HCT116 (cell line): ENCODE measurements at regions of chr2 and their contacts with region 1.

Region 1: DNA sequence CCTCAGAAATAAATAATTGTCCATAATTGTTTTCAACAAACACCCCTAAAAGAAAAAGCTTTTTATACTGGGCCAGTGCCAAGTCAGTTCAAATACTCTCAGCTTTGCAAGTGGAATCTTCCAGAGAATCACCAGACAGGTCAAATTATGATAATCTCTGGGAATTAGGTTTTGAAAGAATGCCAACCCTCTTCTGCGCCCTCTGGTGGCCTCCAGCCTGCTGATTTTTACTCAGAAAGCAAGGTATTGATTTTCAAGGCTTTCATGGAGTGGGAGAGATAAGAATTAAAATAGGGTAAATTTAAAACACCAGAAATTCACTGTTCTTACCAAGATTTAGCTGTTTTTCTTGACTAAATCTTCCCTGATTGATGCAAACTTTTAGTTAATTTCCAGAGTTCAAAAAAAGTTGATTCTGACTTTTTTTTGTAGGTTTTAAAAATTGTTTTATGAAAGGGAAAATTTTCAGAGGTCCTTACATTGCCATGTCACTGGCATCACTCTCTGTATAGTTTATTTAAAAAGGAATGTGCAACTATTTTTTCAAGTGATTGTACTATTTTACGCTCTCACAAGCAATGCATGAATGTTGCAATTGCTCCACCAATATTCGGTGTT is 282.9 kb upstream of the TNP1 start:
- DNase-seq: peak; percentile 29
- ATAC-seq: peak; percentile 64
- H3K4me3 ChIP-seq: no peak overlapping the region
- H3K27ac ChIP-seq: no peak overlapping the region
- H3K4me1 ChIP-seq: no peaks in the 10 kb centered on the region
- H3K27me3 ChIP-seq: peaks cover 22% of the 10 kb centered on the region
- CTCF ChIP-seq: peak; percentile 75 to 88 (median 83); a peak in 5 of 6 replicates
- POLR2A ChIP-seq: no peak
- RAD21 ChIP-seq: peak; percentile 74

Region 2: GRCh38 chr2:216777650-216778273 is 365.0 kb before region 1 on chr2:
- CTCF ChIA-PET with region 1: no interaction called
- POLR2A ChIA-PET with region 1: no interaction called
- RAD21 ChIA-PET with region 1: no interaction called
- intact Hi-C with region 1: loop called (anchors 2 kb)
- DNase-seq: peak; percentile 84
- ATAC-seq: peak; percentile 99
- H3K4me3 ChIP-seq: no peak overlapping the region
- H3K27ac ChIP-seq: no peak overlapping the region
- H3K4me1 ChIP-seq: no peaks in the 10 kb centered on the region
- H3K27me3 ChIP-seq: no peaks in the 10 kb centered on the region
- CTCF ChIP-seq: peak; percentile 95 to 99 (median 95)
- POLR2A ChIP-seq: no peak
- RAD21 ChIP-seq: peak; percentile 73